ENCODE measurements at regions of chr2 and their contacts with region 1.

Region 1: DNA sequence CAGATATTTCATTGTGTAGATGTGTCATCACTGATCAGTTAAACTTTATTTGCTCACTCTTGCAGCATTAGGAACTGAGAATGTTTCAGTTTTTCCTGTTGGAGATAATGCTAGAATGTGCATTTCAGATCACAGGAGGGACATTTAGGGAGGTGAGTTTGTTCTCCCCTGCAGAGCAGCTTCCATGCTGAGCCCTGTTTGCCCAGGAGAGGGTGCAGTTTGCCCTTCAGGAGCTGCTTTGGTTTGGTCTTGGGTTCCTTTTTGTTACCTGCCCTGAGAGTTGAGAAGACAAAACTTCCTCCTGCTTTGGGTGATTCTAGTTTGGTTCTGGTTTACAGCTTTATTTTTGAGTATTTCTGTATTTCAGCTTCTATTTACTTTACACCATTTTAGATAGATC is 49.9 kb downstream of the DGKD start:
- DNase-seq: peak; percentile 58
- H3K4me3 Mint-ChIP-seq: no peak overlapping the region
- H3K27ac Mint-ChIP-seq: no peak overlapping the region
- H3K4me1 Mint-ChIP-seq: peaks cover 54% of the 10 kb centered on the region
- H3K27me3 Mint-ChIP-seq: no peaks in the 10 kb centered on the region

Region 2: GRCh38 chr2:232447638-232448303 is 956.5 kb before region 1 on chr2:
- intact Hi-C with region 1: no loop called
- DNase-seq: no peak
- H3K4me3 Mint-ChIP-seq: no peak overlapping the region
- H3K27ac Mint-ChIP-seq: no peak overlapping the region
- H3K4me1 Mint-ChIP-seq: peaks cover 4% of the 10 kb centered on the region
- H3K27me3 Mint-ChIP-seq: peaks cover 2% of the 10 kb centered on the region

Region 3: GRCh38 chr2:233353769-233354499 is 50.3 kb before region 1 on chr2 and contains the start of gene DGKD:
- intact Hi-C with region 1: loop called (anchors 5 kb)
- DNase-seq: no peak
- H3K4me3 Mint-ChIP-seq: peak within 1 kb of the TSS; percentile 87
- H3K27ac Mint-ChIP-seq: peak within 1 kb of the TSS; percentile 90
- H3K4me1 Mint-ChIP-seq: peaks cover 67% of the 10 kb centered on the region
- H3K27me3 Mint-ChIP-seq: no peaks in the 10 kb centered on the region
- total RNA-seq, gene DGKD: 42.5 and 43.7 TPM in 2 replicates

Region 4: DNA sequence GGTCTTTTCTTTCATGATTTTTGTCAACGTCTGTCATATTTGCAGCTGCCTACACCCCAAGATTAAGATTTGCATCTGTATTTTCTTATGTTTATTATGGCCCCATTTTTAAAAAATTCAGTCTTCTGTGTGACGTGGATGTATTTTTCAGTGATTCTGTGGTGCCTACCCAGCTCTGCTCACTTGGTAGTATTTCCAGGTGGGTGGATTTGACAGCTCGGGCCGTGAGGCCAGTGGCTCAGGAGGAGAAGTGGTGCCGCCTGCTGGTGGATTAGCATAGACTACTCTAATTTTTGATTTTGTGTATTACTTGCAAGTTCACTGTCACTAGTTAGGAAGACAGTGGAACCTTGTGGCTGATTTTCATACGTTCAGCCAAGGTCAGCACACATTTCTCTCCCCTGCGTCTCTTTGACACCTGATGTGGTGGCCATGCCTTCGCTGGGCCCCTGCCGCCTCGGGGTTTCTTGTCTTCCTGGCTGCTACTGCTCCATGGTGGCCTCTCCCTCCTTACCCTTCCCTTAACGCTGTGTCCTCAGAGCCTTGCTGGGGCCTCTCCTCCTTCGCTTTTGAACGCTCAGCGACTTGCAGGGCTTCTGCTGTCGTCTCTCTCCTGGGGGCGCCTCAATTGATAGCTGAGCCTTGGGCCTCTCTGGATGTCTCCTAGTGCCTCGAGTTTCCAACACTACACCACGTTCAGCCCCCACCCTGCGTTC is 39.4 kb after region 1 on chr2:
- intact Hi-C with region 1: loop called (anchors 1 kb)
- DNase-seq: peak; percentile 67
- H3K4me3 Mint-ChIP-seq: no peak overlapping the region
- H3K27ac Mint-ChIP-seq: peak overlapping the region; percentile 56
- H3K4me1 Mint-ChIP-seq: peaks cover 21% of the 10 kb centered on the region
- H3K27me3 Mint-ChIP-seq: no peaks in the 10 kb centered on the region

Region 5: GRCh38 chr2:233711312-233712008 is 307.2 kb after region 1 on chr2:
- intact Hi-C with region 1: loop called (anchors 2 kb)
- DNase-seq: peak; percentile 40
- H3K4me3 Mint-ChIP-seq: no peak overlapping the region
- H3K27ac Mint-ChIP-seq: no peak overlapping the region
- H3K4me1 Mint-ChIP-seq: no peaks in the 10 kb centered on the region
- H3K27me3 Mint-ChIP-seq: peaks cover 11% of the 10 kb centered on the region

Measured in activated T-helper 1 cell treated with anti-CD3 and anti-CD28 coated beads, Interleukin-12 subunit alpha, Interleukin-12 subunit beta, Interleukin-2, Interleukin-4 antibody, amounts not matched to agents 30 ng/mL and 10 ng/mL and 1 ng/mL, durations not matched to agents 14 hours and 24 hours and 36 hours (primary cell).